Activated CD4-positive, alpha-beta T cell treated with anti-CD3 and anti-CD28 coated beads for 36 hours (primary cell): ENCODE measurements at regions of chr14 and their contacts with region 1.

Region 1: GRCh38 chr14:55015006-55015405 is 11.9 kb downstream of the WDHD1 start:
- DNase-seq: no peak
- ATAC-seq: no peak
- H3K4me3 Mint-ChIP-seq: no peak overlapping the region
- H3K27ac Mint-ChIP-seq: no peak overlapping the region
- H3K4me1 Mint-ChIP-seq: no peaks in the 10 kb centered on the region
- H3K27me3 Mint-ChIP-seq: no peaks in the 10 kb centered on the region

Region 2: GRCh38 chr14:54955143-54955542 is 59.9 kb before region 1 on chr14:
- CTCF ChIA-PET with region 1: no interaction called
- POLR2A ChIA-PET with region 1: no interaction called
- intact Hi-C with region 1: no loop called
- DNase-seq: no peak
- ATAC-seq: no peak
- H3K4me3 Mint-ChIP-seq: no peak overlapping the region
- H3K27ac Mint-ChIP-seq: no peak overlapping the region
- H3K4me1 Mint-ChIP-seq: no peaks in the 10 kb centered on the region
- H3K27me3 Mint-ChIP-seq: no peaks in the 10 kb centered on the region

Region 3: DNA sequence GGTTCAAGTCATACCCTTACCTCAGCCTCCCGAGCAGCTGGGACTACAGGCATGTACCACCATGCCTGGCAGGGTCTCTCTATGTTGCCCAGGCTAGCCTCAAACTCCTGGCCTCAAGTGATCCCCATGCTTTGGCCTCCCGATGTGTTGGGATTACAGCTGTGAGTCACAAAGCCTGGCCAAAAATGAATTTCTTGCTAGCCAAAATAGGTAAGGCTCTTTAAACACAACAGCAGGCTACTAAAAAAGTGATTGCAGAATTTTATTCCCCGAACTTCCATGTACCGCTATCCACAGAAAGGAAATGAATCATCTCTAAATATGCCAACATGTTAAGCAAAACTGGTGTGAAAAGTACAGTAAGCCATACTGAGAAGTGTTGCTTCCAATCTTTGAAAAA is 38.7 kb before region 1 on chr14:
- CTCF ChIA-PET with region 1: no interaction called
- POLR2A ChIA-PET with region 1: no interaction called
- intact Hi-C with region 1: loop called in 1 of 2 experiments (anchors 2 kb)
- DNase-seq: no peak
- ATAC-seq: no peak
- H3K4me3 Mint-ChIP-seq: no peak overlapping the region
- H3K27ac Mint-ChIP-seq: no peak overlapping the region
- H3K4me1 Mint-ChIP-seq: peaks cover 3% of the 10 kb centered on the region
- H3K27me3 Mint-ChIP-seq: no peaks in the 10 kb centered on the region